Sciatic nerve (tissue), 2 donors: ENCODE measurements at regions of chr1 and their contacts with region 1.

Region 1: GRCh38 chr1:84944767-84945486 is 51.9 kb upstream of the LPAR3 start:
- DNase-seq: peak; percentile 74
- ATAC-seq: peak; percentile 97

Region 2: GRCh38 chr1:84907095-84907827 is 37.7 kb before region 1 on chr1:
- intact Hi-C with region 1: no loop called
- DNase-seq: no peak
- ATAC-seq: no peak

Region 3: DNA sequence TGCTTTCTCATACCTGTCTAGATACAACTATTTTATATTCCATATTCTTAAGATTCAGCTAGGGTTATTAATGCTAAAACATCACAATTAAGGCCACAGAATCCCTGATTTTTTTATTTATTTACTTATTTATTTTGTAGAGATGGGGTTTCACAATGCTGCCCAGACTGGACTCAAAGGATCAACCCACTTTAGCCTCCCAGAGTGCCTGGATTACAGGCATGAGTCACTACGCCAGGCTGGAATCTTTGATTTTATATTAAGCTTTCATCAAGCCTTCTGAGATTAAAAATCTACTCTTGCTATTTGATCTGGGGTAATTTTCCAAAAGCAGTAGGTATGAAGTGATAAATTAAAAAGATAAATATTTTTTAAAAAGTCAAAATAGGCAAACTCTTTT is 13.0 kb after region 1 on chr1:
- intact Hi-C with region 1: loop called (anchors 1 kb)
- DNase-seq: no peak
- ATAC-seq: no peak

Region 4: GRCh38 chr1:84988588-84988987 is 43.7 kb after region 1 on chr1:
- intact Hi-C with region 1: no loop called
- DNase-seq: no peak
- ATAC-seq: no peak

Region 5: GRCh38 chr1:85259118-85259911 is 314.4 kb after region 1 on chr1 and contains the start of gene C1orf52:
- intact Hi-C with region 1: loop called (anchors 2 kb)
- DNase-seq: peak; percentile 98
- ATAC-seq: peak; percentile 99
- total RNA-seq, gene C1orf52: 30.9 TPM